ENCODE measurements at regions of chr3 and their contacts with region 1.

Region 1: DNA sequence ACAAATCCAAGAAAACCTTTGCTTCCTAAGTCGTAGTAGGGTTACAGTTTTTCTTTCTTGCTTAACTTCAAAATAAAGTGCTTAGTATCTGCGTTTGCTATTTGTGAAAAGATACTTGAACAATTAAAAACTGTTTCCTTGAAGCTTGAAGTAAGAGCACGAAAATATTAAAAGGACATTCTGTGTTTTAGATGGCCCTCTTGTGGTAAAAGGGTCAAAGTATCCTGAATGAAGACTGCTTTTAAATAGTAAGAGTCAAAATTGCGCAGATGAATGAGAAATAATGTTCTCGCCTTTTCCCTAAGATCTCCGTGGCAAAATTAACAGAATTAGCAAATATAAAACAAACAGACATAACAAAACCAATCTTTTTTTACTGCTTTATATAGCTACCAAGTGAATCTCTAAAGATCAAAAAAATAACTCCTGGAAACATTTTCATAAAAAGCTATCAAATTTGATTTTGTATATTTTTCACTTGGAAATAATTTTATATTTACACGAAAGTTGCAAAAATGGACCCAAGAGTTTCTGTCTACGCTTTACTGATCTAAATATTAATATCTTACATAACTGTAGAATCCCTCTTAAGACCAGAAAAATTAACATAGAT is 175.4 kb downstream of the MBNL1 start:
- DNase-seq: no peak
- ATAC-seq: no peak
- H3K4me3 Mint-ChIP-seq: no peak overlapping the region
- H3K27ac Mint-ChIP-seq: no peak overlapping the region
- H3K4me1 Mint-ChIP-seq: peaks cover 49% of the 10 kb centered on the region
- H3K27me3 Mint-ChIP-seq: no peaks in the 10 kb centered on the region

Region 2: DNA sequence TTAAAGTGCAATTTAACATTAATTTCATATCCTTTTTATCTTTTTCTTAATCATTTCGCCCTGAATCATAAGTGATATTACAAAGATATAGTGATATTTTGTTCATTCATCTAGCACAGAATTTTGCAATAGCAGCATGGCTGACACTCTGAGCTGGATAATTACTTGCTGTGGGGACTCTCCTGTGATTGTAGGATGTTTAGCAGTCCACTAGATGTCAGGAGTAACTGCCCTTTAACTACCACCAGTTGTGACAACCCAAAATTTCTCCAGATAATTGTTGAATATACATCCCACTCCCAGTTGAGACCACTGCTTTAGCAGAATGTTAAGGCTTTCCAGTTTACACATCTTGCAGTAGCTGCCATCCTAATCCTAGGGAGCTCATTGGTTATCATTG is 372.2 kb before region 1 on chr3:
- CTCF ChIA-PET with region 1: interaction called, 16 read pairs
- POLR2A ChIA-PET with region 1: no interaction called
- DNase-seq: peak; percentile 28
- ATAC-seq: peak; percentile 67
- H3K4me3 Mint-ChIP-seq: no peak overlapping the region
- H3K27ac Mint-ChIP-seq: no peak overlapping the region
- H3K4me1 Mint-ChIP-seq: no peaks in the 10 kb centered on the region
- H3K27me3 Mint-ChIP-seq: no peaks in the 10 kb centered on the region

Region 3: GRCh38 chr3:152466784-152467183 is 22.6 kb after region 1 on chr3:
- CTCF ChIA-PET with region 1: interaction called, 11 read pairs
- POLR2A ChIA-PET with region 1: no interaction called
- DNase-seq: no peak
- ATAC-seq: peak; percentile 77
- H3K4me3 Mint-ChIP-seq: no peak overlapping the region
- H3K27ac Mint-ChIP-seq: no peak overlapping the region
- H3K4me1 Mint-ChIP-seq: no peaks in the 10 kb centered on the region
- H3K27me3 Mint-ChIP-seq: no peaks in the 10 kb centered on the region